GM12878 (cell line): ENCODE measurements at regions of chr6 and their contacts with region 1.

Region 1: DNA sequence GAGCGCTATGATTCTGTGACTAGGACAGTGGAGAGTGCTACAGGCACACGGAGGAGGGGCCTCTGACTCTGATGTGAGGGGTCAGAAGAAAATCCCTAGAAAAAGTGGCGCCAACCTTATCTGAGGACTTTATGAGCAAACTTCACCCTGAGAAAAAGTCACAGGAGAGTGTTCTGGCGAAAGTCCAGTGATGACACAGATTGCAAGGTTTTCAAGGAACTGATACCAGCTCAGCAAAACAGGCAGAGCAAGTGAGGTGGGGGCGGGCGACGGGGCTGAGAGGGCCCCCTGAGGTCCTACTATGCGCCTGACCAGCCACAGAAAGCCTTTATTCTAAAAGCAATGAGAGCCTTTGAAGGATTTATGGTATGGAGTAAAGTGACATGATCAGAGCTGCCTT is 73.3 kb downstream of the SLC22A23 start:
- DNase-seq: peak; percentile 75
- ATAC-seq: peak; percentile 69
- H3K4me3 ChIP-seq: no peak overlapping the region
- H3K27ac ChIP-seq: peak overlapping the region; percentile 50
- H3K4me1 ChIP-seq: peaks cover 58% of the 10 kb centered on the region
- H3K27me3 ChIP-seq: no peaks in the 10 kb centered on the region
- CTCF ChIP-seq: no peak
- EP300 ChIP-seq: peak; percentile 75 to 87; a peak in 3 of 4 replicates
- POLR2A ChIP-seq: no peak
- RAD21 ChIP-seq: no peak

Region 2: DNA sequence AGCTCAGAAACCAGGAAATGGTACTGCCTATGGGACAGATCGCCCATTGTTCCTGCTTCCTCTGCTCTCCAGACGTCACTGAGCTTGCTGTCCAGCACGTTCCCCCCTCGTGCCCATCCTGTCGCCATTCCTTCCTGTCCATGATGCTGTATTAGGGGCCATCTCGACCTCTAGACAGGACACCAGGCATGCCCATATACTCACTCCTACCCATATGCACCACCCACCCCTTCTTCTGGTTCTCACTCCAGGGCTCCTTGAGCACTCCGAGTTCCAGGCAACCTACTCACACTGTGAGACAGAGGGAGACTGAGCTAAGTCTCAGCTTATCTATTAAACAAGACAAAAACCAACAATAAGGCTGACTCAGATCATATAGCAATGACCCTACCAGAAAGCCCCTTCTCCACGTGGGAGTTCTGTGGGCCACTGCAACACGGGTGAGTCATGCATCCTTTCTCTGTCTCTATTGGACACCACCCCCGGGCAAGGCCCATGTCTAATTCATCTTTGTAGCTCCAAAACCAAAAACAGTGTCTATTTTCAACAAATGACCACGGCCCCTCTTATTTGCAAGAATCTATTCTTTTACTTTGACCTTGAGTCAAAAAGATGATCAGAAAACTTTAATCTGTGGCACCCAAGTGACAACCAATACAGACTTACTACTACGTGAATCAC is 59.1 kb before region 1 on chr6:
- CTCF ChIA-PET with region 1: interaction called, 7 read pairs
- POLR2A ChIA-PET with region 1: interaction called, 5 read pairs
- RAD21 ChIA-PET with region 1: interaction called, 21 read pairs
- SMC1A ChIA-PET with region 1: interaction called, 6 read pairs
- in situ Hi-C with region 1: no loop called
- intact Hi-C with region 1: no loop called
- DNase-seq: peak; percentile 48
- ATAC-seq: peak; percentile 98
- H3K4me3 ChIP-seq: no peak overlapping the region
- H3K27ac ChIP-seq: no peak overlapping the region
- H3K4me1 ChIP-seq: no peaks in the 10 kb centered on the region; the same call in 1 of the 2 replicates
- H3K27me3 ChIP-seq: no peaks in the 10 kb centered on the region; a peak in 1 of 4 replicates
- CTCF ChIP-seq: no peak
- EP300 ChIP-seq: peak; percentile 57 to 64; a peak in 3 of 4 replicates
- POLR2A ChIP-seq: no peak
- RAD21 ChIP-seq: no peak

Region 3: DNA sequence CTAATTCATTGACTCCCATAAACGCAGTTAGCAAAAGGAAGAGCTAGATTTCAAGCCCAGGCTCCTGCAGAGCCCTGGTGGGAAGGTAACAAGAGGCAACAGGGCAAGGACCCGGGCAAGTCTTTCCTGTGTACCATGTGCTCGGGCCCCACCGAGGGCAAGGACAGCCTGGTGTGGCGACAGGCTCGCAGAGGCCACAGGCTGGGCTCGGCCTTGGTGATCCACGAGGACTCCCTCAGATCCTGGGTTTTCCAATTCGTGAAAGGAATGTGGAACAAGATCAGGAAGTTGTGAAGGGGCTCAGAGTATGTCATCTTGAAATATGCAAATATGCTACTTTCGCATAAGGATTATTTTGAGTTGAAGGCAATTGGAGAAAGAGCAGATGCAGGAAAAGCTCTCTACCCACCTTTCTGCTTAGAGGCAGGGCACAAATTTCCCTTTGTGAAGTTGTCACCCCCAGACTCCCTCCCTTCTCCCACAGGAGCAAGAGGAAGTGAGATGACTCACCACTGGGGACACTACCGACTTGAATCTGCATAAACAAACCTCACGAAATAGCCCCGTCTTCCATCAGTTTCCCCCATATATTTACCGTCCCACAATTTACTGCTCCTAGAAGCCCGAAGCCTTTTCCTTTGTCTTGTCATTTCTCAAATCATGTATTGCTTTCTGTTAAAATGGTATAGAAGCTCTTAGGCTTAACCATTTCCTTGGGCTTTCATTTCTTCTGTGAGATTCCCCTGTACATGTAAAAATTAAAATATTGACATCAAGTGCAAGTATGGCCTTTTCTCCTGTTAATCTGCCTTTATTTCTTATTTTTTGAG is 45.8 kb before region 1 on chr6:
- CTCF ChIA-PET with region 1: interaction called, 3 read pairs
- POLR2A ChIA-PET with region 1: interaction called, 9 read pairs
- RAD21 ChIA-PET with region 1: interaction called, 6 read pairs
- SMC1A ChIA-PET with region 1: interaction called, 44 read pairs
- in situ Hi-C with region 1: no loop called
- intact Hi-C with region 1: loop called (anchors 5 kb)
- DNase-seq: no peak
- ATAC-seq: peak; percentile 47
- H3K4me3 ChIP-seq: peak overlapping the region; percentile 25; the same call in 1 of the 2 replicates
- H3K27ac ChIP-seq: peak overlapping the region; percentile 5; the same call in 1 of the 2 replicates
- H3K4me1 ChIP-seq: peaks cover 25% of the 10 kb centered on the region
- H3K27me3 ChIP-seq: no peaks in the 10 kb centered on the region
- CTCF ChIP-seq: peak in 2 of 3 experiments; percentile 15 to 16; a peak in 2 of 6 replicates
- EP300 ChIP-seq: peak in 1 of 2 experiments; percentile 17; a peak in 1 of 4 replicates
- POLR2A ChIP-seq: no peak
- RAD21 ChIP-seq: no peak

Region 4: GRCh38 chr6:3356056-3356761 is 27.3 kb before region 1 on chr6:
- CTCF ChIA-PET with region 1: interaction called, 5 read pairs
- POLR2A ChIA-PET with region 1: interaction called, 6 read pairs
- RAD21 ChIA-PET with region 1: interaction called, 13 read pairs
- SMC1A ChIA-PET with region 1: interaction called, 18 read pairs
- in situ Hi-C with region 1: no loop called
- intact Hi-C with region 1: loop called (anchors 2 kb)
- DNase-seq: peak; percentile 77
- ATAC-seq: peak; percentile 99
- H3K4me3 ChIP-seq: peak overlapping the region; percentile 52; the same call in 1 of the 2 replicates
- H3K27ac ChIP-seq: peak overlapping the region; percentile 63
- H3K4me1 ChIP-seq: peaks cover 7% of the 10 kb centered on the region
- H3K27me3 ChIP-seq: no peaks in the 10 kb centered on the region
- CTCF ChIP-seq: no peak
- EP300 ChIP-seq: peak in 1 of 2 experiments; percentile 77; a peak in 3 of 4 replicates
- POLR2A ChIP-seq: 0 out of 2 replicates have a peak, but pooled peaks have one; percentile 32
- RAD21 ChIP-seq: no peak

Region 5: GRCh38 chr6:3363296-3364025 is 20.1 kb before region 1 on chr6:
- CTCF ChIA-PET with region 1: interaction called, 7 read pairs
- POLR2A ChIA-PET with region 1: interaction called, 8 read pairs
- RAD21 ChIA-PET with region 1: interaction called, 7 read pairs
- SMC1A ChIA-PET with region 1: interaction called, 103 read pairs
- in situ Hi-C with region 1: no loop called
- intact Hi-C with region 1: no loop called
- DNase-seq: no peak
- ATAC-seq: no peak
- H3K4me3 ChIP-seq: no peak overlapping the region
- H3K27ac ChIP-seq: no peak overlapping the region
- H3K4me1 ChIP-seq: peaks cover 6% of the 10 kb centered on the region; the same call in 1 of the 2 replicates
- H3K27me3 ChIP-seq: no peaks in the 10 kb centered on the region
- CTCF ChIP-seq: no peak
- EP300 ChIP-seq: no peak
- POLR2A ChIP-seq: no peak
- RAD21 ChIP-seq: no peak

Region 6: DNA sequence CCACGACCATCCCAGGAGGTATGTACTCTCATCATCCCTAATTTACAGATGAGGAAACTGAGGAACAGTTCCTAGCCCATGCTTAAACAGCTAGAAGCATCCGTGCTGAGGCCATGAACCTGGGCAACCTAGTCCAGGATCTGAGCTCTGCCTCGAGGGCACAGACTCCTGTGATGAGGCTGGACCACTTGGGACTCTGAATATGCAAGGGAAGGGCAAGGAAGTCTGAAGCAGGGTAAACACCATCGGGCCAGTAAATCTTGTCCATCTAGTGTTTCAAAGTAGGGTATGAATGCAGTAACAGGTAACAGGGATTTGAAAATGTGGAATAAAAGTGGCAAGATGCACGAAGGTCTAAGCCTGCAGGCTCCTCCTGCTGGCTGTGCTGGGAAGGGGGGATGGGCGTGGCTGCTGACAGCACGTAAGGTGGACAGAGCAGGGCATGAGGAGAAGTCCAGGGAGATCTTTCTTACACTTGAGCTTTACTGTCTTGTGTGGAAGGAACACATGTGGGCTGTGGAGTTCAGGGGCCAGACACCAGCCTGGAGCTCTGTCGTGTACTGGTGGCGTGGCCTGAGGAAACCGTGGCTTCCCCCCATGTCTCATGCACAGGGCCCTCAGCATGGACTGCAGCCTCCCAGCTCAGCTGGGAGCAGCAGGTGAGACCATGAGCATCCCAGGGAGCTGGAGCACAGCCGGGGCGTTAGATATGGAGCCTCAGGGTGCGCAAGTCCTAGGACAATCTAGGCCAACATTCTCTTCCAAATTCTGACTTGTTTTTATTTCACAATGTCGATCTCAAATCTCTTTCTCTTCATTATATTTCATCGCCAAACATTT is 11.3 kb before region 1 on chr6:
- CTCF ChIA-PET with region 1: interaction called, 7 read pairs
- POLR2A ChIA-PET with region 1: interaction called, 17 read pairs
- RAD21 ChIA-PET with region 1: interaction called, 21 read pairs
- SMC1A ChIA-PET with region 1: interaction called, 103 read pairs
- in situ Hi-C with region 1: no loop called
- intact Hi-C with region 1: no loop called
- DNase-seq: no peak
- ATAC-seq: no peak
- H3K4me3 ChIP-seq: no peak overlapping the region
- H3K27ac ChIP-seq: no peak overlapping the region
- H3K4me1 ChIP-seq: peaks cover 6% of the 10 kb centered on the region; the same call in 1 of the 2 replicates
- H3K27me3 ChIP-seq: no peaks in the 10 kb centered on the region
- CTCF ChIP-seq: peak in 2 of 3 experiments; percentile 3 to 9; a peak in 1 of 6 replicates
- EP300 ChIP-seq: no peak
- POLR2A ChIP-seq: no peak
- RAD21 ChIP-seq: no peak

Region 7: DNA sequence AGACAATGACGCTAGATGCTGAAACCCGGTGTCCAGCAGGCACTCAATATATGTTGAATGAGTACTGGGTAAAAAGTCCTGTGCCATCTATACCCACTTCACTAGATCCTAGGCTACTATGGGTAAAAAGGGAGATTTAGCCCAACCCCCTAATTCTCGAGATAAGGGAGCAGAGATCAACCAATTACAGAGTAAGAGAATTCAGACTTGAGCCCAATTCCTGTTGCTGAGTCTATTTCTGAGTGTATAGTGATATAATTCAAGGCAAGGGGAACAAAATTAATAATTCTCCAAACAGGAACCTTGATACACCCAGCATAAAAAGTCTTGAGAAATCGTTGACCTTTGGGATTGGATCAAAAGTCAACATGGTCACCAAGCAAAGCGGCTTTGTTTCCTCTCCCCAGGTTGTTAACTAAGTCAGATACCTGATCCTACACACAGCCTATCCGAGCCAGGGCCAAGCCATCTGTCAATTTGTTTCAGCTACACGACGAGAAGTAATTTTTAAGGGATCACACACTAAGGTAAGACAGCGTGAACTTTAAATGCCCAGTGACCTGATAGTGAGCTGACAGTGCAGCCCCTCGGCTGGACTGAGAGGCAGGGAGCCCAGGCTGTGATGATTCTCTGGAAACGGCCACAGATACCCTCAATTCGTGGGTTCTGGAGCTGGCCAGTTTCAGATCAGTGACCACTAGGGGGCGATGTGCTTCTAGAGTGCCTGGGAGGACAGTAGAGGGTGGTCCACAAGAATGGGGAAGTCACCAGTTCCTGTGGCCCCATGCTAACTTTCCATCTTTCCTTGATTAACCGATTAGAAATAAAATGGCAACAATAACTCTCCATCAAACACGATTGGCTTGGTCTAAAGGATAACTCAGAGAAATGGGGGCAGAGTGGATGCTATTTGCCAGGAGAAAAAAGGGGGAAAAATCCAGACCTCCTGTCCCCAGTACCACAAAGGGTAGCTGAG is 27.1 kb after region 1 on chr6:
- CTCF ChIA-PET with region 1: interaction called, 15 read pairs
- POLR2A ChIA-PET with region 1: no interaction called
- RAD21 ChIA-PET with region 1: interaction called, 4 read pairs
- SMC1A ChIA-PET with region 1: interaction called, 4 read pairs
- in situ Hi-C with region 1: no loop called
- intact Hi-C with region 1: no loop called
- DNase-seq: no peak
- ATAC-seq: peak; percentile 93
- H3K4me3 ChIP-seq: no peak overlapping the region
- H3K27ac ChIP-seq: no peak overlapping the region
- H3K4me1 ChIP-seq: peaks cover 9% of the 10 kb centered on the region
- H3K27me3 ChIP-seq: no peaks in the 10 kb centered on the region
- CTCF ChIP-seq: peak; percentile 55 to 75 (median 73)
- EP300 ChIP-seq: no peak
- POLR2A ChIP-seq: no peak
- RAD21 ChIP-seq: peak; percentile 68